ENCODE measurements at regions of chr5 and their contacts with region 1.

Region 1: GRCh38 chr5:15013654-15014463 is 142.3 kb upstream of the ANKH start:
- DNase-seq: peak; percentile 80
- ATAC-seq: peak; percentile 75
- H3K4me3 ChIP-seq: no peak overlapping the region
- H3K27ac ChIP-seq: no peak overlapping the region
- H3K4me1 ChIP-seq: peaks cover 12% of the 10 kb centered on the region
- H3K27me3 ChIP-seq: no peaks in the 10 kb centered on the region
- CTCF ChIP-seq: peak; percentile 76
- POLR2A ChIP-seq: no peak
- RAD21 ChIP-seq: peak; percentile 79

Region 2: DNA sequence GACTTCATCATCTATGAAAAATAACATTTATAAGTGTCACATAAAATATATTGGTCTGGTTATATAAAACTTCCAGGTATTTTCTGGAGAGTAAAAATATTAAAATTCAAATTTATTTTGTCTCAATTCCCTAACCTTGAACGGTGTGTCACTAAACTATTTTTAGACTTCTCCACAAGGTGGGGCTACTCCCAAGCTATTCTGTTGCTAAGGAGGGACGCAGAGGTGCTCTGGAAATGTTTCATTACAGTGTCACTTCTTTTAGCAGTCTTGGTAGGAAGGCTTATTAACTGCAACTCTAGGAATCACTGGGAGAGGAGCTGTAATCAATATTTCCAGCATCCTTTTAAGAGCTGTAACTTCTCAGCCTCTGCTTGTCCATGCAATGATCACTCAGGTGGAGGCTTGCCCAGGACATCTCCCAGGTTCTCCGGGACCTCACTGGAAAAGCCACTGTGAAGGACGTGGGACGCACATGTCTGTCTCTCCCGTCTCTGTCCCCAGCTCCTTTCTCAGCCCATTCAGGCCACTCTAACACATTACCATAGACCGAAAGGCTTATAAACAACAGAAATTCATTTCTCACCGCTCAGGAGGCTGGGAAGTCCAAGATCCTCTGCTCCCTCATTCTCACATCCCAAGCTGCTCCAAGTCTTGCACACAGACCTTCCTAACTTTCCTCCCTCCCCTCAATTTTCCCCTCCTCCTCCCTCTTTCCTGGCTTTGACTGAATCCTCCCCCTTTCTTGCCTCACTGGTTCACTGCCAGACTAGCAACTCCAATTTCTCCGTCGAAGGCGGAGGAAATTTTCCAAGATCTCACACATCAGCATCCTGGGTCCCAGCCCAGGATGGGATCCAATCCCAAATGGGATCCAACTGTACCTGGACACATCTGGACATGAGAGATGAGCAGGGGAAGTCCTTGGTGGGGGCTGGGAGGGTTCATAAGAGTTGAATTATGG is 1036.7 kb before region 1 on chr5:
- CTCF ChIA-PET with region 1: no interaction called
- POLR2A ChIA-PET with region 1: no interaction called
- dilution Hi-C with region 1: no loop called
- in situ Hi-C with region 1: no loop called
- intact Hi-C with region 1: loop called (anchors 5 kb)
- DNase-seq: peak; percentile 70
- ATAC-seq: peak; percentile 86
- H3K4me3 ChIP-seq: no peak overlapping the region
- H3K27ac ChIP-seq: no peak overlapping the region
- H3K4me1 ChIP-seq: peaks cover 5% of the 10 kb centered on the region
- H3K27me3 ChIP-seq: no peaks in the 10 kb centered on the region
- CTCF ChIP-seq: peak; percentile 63
- POLR2A ChIP-seq: no peak
- RAD21 ChIP-seq: peak; percentile 80

Region 3: DNA sequence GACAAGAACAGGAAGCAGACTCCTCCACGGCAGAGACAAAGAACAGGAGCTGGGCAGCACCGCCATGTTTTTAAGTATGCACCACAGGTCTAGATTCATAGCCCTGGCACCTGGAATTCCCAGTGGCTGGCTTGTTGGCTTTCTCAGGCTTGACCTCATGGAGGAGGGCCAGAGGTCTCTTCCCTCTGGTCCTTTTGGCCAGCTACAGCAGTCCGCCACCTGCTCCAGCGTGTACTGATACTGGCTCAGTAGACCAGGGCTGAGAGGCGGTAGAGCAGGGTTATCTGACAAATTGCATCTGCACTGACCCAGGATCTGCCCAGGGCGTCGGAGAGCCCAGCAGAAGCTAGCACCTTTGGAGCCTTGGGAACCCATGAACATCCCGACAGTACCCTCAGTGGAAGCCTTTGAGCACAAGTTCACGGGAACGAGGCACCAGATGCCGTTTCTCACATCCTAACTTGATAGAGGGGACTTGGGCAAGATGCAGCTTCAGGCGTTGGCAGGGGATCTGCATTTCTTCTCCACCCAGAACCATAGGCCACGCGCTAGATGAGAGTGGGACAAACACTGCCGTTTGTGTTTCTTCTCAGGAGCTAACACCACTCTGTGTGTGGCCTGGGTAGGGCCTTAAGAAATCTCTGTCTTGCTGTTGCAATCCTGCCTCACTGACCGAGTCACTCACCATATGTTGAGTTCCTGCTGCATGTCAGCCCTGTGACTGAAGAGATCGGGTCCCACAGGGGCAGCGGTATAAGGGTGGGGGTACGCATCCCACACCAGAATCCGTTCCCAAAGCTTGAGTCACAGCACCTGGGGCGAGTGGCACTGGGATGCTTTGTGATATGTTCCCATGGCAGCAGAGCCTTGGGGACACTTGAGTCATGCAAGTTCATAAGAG is 522.6 kb before region 1 on chr5:
- CTCF ChIA-PET with region 1: no interaction called
- POLR2A ChIA-PET with region 1: no interaction called
- dilution Hi-C with region 1: no loop called
- in situ Hi-C with region 1: no loop called
- intact Hi-C with region 1: loop called (anchors 5 kb)
- DNase-seq: peak; percentile 75
- ATAC-seq: peak; percentile 16
- H3K4me3 ChIP-seq: no peak overlapping the region
- H3K27ac ChIP-seq: peak overlapping the region; percentile 0; the same call in 1 of the 2 replicates
- H3K4me1 ChIP-seq: peaks cover 16% of the 10 kb centered on the region
- H3K27me3 ChIP-seq: no peaks in the 10 kb centered on the region
- CTCF ChIP-seq: no peak
- POLR2A ChIP-seq: no peak
- RAD21 ChIP-seq: no peak

Measured in IMR-90 (cell line).